ENCODE measurements at regions of chr1 and their contacts with region 1.

Region 1: GRCh38 chr1:181424786-181425403 is 58.4 kb upstream of the CACNA1E start:
- DNase-seq: peak; percentile 74
- ATAC-seq: peak; percentile 68 to 76
- H3K4me3 ChIP-seq: no peak overlapping the region
- H3K27ac ChIP-seq: no peak overlapping the region
- H3K4me1 ChIP-seq: no peaks in the 10 kb centered on the region
- H3K27me3 ChIP-seq: peaks cover 9% of the 10 kb centered on the region
- CTCF ChIP-seq: peak; percentile 96

Region 2: GRCh38 chr1:181189691-181190363 is 235.1 kb before region 1 on chr1:
- intact Hi-C with region 1: loop called (anchors 10 kb)
- DNase-seq: peak; percentile 75
- ATAC-seq: peak; percentile 89 to 90
- H3K4me3 ChIP-seq: no peak overlapping the region
- H3K27ac ChIP-seq: no peak overlapping the region
- H3K4me1 ChIP-seq: peaks cover 9% of the 10 kb centered on the region
- H3K27me3 ChIP-seq: peaks cover 16% of the 10 kb centered on the region
- CTCF ChIP-seq: peak; percentile 98

Region 3: GRCh38 chr1:181284978-181285377 is 139.9 kb before region 1 on chr1:
- intact Hi-C with region 1: no loop called
- DNase-seq: no peak
- ATAC-seq: no peak
- H3K4me3 ChIP-seq: no peak overlapping the region
- H3K27ac ChIP-seq: no peak overlapping the region
- H3K4me1 ChIP-seq: no peaks in the 10 kb centered on the region
- H3K27me3 ChIP-seq: peaks cover 2% of the 10 kb centered on the region
- CTCF ChIP-seq: no peak

Measured in lower lobe of right lung (tissue), 2 donors.